PC-9 (cell line): ENCODE measurements at regions of chr6 and their contacts with region 1.

Region 1: GRCh38 chr6:155223646-155224451 is 40.0 kb upstream of the CLDN20 start:
- DNase-seq: peak; percentile 43 to 97
- H3K4me3 ChIP-seq: peak overlapping the region; percentile 9; the same call in 1 of the 2 replicates
- H3K27ac ChIP-seq: peak overlapping the region; percentile 92
- H3K4me1 ChIP-seq: peaks cover 25% of the 10 kb centered on the region
- H3K27me3 ChIP-seq: no peaks in the 10 kb centered on the region
- CTCF ChIP-seq: no peak

Region 2: DNA sequence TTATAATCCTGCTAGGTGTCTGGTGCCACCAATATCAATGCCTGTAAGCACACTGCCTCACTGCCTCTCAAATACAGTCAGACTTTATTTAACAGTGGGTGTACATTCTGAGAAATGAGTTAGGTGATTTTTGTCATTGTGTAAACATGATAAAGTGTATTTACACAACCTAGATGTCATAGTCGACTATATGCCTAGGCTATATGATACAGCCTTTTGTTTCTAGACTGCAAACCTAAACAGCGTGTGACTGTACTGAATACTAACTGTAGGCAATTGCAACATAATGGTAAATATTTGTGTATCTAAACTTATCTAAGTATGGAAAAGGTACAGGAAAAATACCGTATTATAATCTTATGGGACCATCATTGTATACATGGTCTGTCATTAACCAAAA is 1393.8 kb before region 1 on chr6:
- CTCF ChIA-PET with region 1: no interaction called
- POLR2A ChIA-PET with region 1: no interaction called
- intact Hi-C with region 1: no loop called
- DNase-seq: no peak
- H3K4me3 ChIP-seq: no peak overlapping the region
- H3K27ac ChIP-seq: no peak overlapping the region
- H3K4me1 ChIP-seq: no peaks in the 10 kb centered on the region
- H3K27me3 ChIP-seq: no peaks in the 10 kb centered on the region
- CTCF ChIP-seq: no peak

Region 3: GRCh38 chr6:155248008-155249001 is 24.5 kb after region 1 on chr6:
- CTCF ChIA-PET with region 1: no interaction called
- POLR2A ChIA-PET with region 1: interaction called, 3 read pairs
- intact Hi-C with region 1: loop called (anchors 1 kb)
- DNase-seq: peak; percentile 61 to 81
- H3K4me3 ChIP-seq: peak overlapping the region; percentile 54
- H3K27ac ChIP-seq: peak overlapping the region; percentile 96
- H3K4me1 ChIP-seq: peaks cover 31% of the 10 kb centered on the region
- H3K27me3 ChIP-seq: no peaks in the 10 kb centered on the region
- CTCF ChIP-seq: peak; percentile 82